Activated CD8-positive, alpha-beta T cell treated with anti-CD3 and anti-CD28 coated beads, Interleukin-2, amount 10 ng/mL, durations not matched to agents 7 days and 5 days (primary cell): ENCODE measurements at regions of chr6 and their contacts with region 1.

Region 1: GRCh38 chr6:80214436-80215022 is 108.1 kb downstream of the BCKDHB start:
- DNase-seq: peak; percentile 21
- ATAC-seq: peak; percentile 74
- H3K4me3 Mint-ChIP-seq: no peak overlapping the region
- H3K27ac Mint-ChIP-seq: no peak overlapping the region
- H3K4me1 Mint-ChIP-seq: no peaks in the 10 kb centered on the region
- H3K27me3 Mint-ChIP-seq: no peaks in the 10 kb centered on the region

Region 2: DNA sequence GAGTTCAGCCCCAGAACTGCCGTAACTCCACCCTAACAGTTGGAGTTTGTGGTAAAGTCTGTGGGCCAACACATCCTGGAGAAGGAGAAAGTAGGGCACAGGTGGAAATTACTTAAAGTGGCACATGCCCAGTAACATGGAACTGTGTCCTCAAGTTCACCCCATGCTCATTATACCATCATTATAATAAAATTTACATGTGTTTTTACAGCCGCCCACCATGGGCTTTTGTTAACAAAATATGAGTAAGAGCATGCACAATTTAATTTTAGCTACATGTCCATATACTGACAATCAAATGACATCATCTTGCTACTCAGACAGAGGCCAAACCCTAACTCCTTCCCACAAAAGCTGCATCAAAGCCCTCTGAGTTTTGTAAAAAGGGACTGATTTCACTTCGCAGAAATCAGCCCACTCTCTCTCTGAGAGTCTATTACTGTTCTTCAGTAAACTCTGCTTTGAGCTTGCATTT is 249.9 kb before region 1 on chr6:
- CTCF ChIA-PET with region 1: no interaction called
- POLR2A ChIA-PET with region 1: no interaction called
- DNase-seq: no peak
- ATAC-seq: peak; percentile 69
- H3K4me3 Mint-ChIP-seq: no peak overlapping the region
- H3K27ac Mint-ChIP-seq: no peak overlapping the region
- H3K4me1 Mint-ChIP-seq: peaks cover 11% of the 10 kb centered on the region
- H3K27me3 Mint-ChIP-seq: peaks cover 25% of the 10 kb centered on the region

Region 3: DNA sequence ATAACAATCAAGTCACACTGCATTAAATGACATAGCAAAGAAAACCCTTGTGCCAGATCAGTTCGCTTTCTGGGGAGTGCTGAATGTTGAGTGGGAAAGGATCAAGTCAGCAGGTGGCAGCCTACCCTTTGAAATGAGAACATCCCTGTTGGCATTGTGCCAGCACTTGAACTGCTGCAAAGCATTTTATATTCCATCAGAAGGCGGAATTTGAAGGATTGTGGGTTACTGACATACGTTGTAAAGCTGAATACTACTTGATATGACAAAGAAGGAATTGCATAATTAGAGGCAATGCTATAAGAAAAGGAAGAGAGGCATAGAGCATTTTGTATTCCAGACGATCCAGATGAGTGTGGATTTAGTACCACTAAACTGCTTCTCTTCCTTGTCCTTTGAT is 81.5 kb before region 1 on chr6:
- CTCF ChIA-PET with region 1: no interaction called
- POLR2A ChIA-PET with region 1: no interaction called
- DNase-seq: peak; percentile 27
- ATAC-seq: no peak
- H3K4me3 Mint-ChIP-seq: no peak overlapping the region
- H3K27ac Mint-ChIP-seq: no peak overlapping the region
- H3K4me1 Mint-ChIP-seq: no peaks in the 10 kb centered on the region
- H3K27me3 Mint-ChIP-seq: no peaks in the 10 kb centered on the region

Region 4: DNA sequence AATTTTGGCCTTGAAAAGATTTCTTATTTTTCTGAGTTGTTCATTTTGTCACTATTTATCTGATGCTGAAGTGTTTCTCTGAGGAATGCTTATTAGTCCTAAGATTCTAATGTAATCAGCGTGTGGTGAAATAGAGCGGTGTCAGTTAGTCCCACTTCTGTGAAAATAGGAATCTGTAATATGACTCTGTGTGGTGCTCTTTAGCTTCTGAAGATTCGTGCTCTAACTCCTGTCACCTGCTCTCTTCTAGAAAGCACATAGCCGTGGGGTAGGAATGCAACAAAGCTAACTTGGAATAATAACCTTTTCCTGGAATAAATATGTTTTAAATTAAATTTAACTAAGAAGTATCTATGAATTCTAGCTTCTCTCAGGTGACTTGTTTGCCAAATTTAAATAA is 17.6 kb before region 1 on chr6:
- CTCF ChIA-PET with region 1: no interaction called
- POLR2A ChIA-PET with region 1: no interaction called
- DNase-seq: no peak
- ATAC-seq: no peak
- H3K4me3 Mint-ChIP-seq: no peak overlapping the region
- H3K27ac Mint-ChIP-seq: no peak overlapping the region
- H3K4me1 Mint-ChIP-seq: no peaks in the 10 kb centered on the region
- H3K27me3 Mint-ChIP-seq: no peaks in the 10 kb centered on the region

Region 5: GRCh38 chr6:80227545-80228105 is 13.1 kb after region 1 on chr6:
- CTCF ChIA-PET with region 1: interaction called, 12 read pairs
- POLR2A ChIA-PET with region 1: no interaction called
- DNase-seq: no peak
- ATAC-seq: no peak
- H3K4me3 Mint-ChIP-seq: no peak overlapping the region
- H3K27ac Mint-ChIP-seq: no peak overlapping the region
- H3K4me1 Mint-ChIP-seq: no peaks in the 10 kb centered on the region
- H3K27me3 Mint-ChIP-seq: no peaks in the 10 kb centered on the region

Region 6: DNA sequence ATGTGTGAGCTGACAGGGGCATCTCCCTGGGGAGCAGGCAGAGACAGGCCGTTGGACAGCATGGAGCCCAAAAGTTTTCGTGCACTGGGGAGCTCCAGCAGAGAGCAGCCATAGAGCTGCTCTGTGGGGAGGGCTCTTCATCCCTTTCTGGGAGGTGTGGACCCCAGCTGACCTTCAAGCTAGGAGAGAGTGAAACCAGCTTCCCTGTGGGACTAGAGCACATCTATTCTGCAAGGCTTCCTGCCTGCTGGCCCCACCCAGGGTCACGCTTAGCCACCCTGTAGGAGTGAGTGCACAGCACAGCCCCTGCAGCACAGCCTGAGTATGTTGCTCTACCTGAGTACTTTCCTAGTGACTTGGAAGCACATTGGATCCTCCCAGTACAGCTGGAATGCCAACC is 75.2 kb after region 1 on chr6:
- CTCF ChIA-PET with region 1: no interaction called
- POLR2A ChIA-PET with region 1: no interaction called
- DNase-seq: no peak
- ATAC-seq: no peak
- H3K4me3 Mint-ChIP-seq: no peak overlapping the region
- H3K27ac Mint-ChIP-seq: no peak overlapping the region
- H3K4me1 Mint-ChIP-seq: no peaks in the 10 kb centered on the region
- H3K27me3 Mint-ChIP-seq: no peaks in the 10 kb centered on the region